ENCODE measurements at regions of chr5 and their contacts with region 1.

Region 1: GRCh38 chr5:141524604-141525597 is 36.0 kb downstream of the PCDHGC5 start:
- DNase-seq: peak; percentile 91 to 98 (median 94)
- H3K4me3 ChIP-seq: no peak overlapping the region
- H3K27ac ChIP-seq: peak overlapping the region; percentile 6 to 81 (median 36)
- H3K4me1 ChIP-seq: peaks cover 46 to 61% of the 10 kb centered on the region in 2 donors
- H3K27me3 ChIP-seq: no peaks in the 10 kb centered on the region
- CTCF ChIP-seq: peak; percentile 99 to 100 (median 100)
- POLR2A ChIP-seq: no peak

Region 2: DNA sequence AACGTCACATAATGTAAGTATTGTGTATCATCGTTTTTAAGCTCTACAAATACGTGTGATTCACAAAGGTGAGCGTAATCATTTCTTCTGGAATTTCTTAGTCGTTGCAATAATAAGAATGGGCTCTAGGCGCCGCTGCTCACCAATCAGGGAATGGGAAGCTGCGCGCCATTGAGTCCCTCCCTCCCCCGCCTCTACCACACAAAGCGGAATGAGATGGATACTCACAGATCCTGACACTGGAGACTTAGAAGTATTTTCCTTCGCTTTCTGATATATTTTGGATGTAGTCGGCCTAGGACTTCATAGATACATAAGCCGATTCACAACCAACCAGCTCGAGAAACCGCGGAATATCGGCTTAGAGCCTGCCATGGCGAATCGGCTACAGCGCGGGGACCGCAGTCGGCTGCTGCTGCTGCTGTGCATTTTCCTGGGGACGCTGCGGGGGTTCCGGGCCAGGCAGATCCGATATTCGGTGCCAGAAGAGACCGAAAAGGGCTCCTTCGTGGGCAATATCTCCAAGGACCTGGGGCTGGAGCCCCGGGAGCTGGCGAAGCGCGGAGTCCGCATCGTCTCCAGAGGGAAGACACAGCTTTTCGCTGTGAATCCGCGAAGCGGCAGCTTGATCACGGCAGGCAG is 103.9 kb before region 1 on chr5 and contains the start of gene PCDHGA11:
- intact Hi-C with region 1: loop called (anchors 10 kb)
- DNase-seq: peak in 1 of 7 donors; percentile 31
- H3K4me3 ChIP-seq: peak within 1 kb of the TSS in 1 of 4 donors; percentile 40
- H3K27ac ChIP-seq: no peak within 1 kb of the TSS
- H3K4me1 ChIP-seq: no peaks in the 10 kb centered on the region
- H3K27me3 ChIP-seq: no peaks in the 10 kb centered on the region
- CTCF ChIP-seq: peak in 5 of 6 experiments; percentile 15 to 41 (median 37)
- POLR2A ChIP-seq: no peak
- total RNA-seq, gene PCDHGA11: 1.6 to 4.9 (median 3.2) TPM